Right ventricle myocardium superior (tissue), 1 donor: ENCODE measurements at regions of chr6 and their contacts with region 1.

Region 1: DNA sequence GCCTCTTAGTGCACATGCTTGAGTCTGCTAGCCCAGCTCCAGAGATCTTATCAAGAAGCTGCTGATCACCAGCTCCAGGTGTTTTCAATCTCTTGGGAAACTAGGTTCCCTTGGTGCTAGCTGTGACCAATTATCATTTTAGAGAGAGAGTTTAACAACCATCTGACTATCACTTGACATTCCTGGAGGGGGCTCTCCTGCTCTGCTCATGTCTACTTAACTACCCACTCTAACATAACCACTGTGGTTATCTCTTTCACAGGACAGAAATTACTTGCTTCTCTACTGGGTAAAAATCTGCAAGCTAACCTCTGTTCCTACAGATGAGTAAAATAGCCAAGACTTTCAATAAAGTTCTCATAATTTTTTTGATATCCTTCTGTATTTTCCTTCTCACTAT is 823.4 kb upstream of the GJE1 start:
- DNase-seq: no peak
- ATAC-seq: peak; percentile 43

Region 2: DNA sequence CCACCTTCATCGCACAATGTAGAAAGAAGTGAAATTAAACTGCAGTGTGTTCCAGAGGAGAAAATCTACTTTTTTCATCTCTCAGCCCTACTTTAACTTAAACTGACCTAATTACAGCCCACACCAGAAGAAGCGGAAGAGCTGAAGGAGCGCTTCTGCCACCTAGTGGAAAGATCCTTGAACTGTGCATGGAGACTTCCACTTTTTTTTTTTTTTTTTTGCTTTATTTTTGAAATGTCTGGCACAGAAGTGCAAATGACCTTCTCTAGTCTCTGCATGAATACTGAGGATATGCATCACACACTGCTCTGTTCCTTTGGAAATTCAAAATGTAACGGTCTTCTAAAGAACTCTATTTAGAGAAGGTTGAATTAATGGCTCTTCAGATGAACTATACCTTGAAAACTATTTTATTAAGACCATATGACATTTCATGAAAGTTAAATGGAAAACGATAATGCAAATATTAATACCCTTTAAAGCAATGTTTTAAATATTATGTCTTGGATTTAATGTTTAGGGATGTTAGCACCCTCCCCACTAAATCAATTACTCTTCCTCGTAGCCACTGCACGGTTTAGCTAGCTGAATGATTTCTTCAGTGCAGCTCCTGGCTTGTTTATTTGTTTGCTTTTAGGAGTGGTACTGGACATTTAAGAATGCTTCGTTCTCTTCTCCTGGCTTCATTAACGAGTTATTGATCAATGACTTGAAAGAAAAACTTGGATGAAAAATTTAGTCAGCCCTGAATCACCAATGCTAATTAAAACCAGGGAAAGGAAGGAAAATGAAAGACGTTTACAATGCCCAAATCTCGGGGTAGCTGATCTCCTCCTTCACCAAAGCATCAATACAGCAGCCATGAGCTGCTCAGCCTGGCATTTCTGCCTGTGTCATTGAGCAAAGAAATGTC is 253.8 kb after region 1 on chr6:
- intact Hi-C with region 1: loop called (anchors 5 kb)
- DNase-seq: peak; percentile 51
- ATAC-seq: peak; percentile 95

Region 3: GRCh38 chr6:141744971-141745370 is 435.7 kb after region 1 on chr6:
- intact Hi-C with region 1: no loop called
- DNase-seq: no peak
- ATAC-seq: no peak